GM12878 (cell line): ENCODE measurements at regions of chr13 and their contacts with region 1.

Region 1: DNA sequence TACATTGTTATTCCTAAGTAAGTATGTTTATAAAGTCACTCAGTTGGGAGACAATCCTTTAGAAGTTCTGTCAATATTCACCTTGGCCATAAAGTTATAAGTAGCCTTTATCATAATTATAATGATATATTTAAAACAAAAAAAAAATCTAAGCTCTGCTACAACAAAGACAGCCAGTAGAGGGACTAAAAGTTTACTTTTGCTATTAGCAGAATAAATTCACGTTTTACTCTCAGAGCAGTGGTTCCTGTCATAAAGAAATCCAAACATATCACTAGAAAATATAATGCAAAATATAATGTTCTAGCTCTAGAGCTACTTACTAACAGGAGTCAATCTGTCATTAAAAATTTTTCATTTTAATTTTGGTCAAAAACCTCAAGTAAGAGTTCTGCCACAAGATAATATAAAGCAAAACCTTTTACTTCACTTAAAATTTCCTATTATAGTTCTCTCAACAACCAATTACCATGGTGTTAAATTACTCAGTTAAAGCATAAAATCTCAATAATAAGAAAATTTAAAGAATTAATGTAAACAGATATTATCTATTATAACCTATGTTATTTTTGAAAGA is 17.7 kb downstream of the INTS6 start:
- DNase-seq: no peak
- ATAC-seq: peak; percentile 67
- H3K4me3 ChIP-seq: no peak overlapping the region
- H3K27ac ChIP-seq: no peak overlapping the region
- H3K4me1 ChIP-seq: no peaks in the 10 kb centered on the region
- H3K27me3 ChIP-seq: no peaks in the 10 kb centered on the region
- CTCF ChIP-seq: peak; percentile 39 to 61 (median 39); a peak in 4 of 6 replicates
- EP300 ChIP-seq: no peak
- POLR2A ChIP-seq: no peak
- RAD21 ChIP-seq: peak; percentile 78

Region 2: DNA sequence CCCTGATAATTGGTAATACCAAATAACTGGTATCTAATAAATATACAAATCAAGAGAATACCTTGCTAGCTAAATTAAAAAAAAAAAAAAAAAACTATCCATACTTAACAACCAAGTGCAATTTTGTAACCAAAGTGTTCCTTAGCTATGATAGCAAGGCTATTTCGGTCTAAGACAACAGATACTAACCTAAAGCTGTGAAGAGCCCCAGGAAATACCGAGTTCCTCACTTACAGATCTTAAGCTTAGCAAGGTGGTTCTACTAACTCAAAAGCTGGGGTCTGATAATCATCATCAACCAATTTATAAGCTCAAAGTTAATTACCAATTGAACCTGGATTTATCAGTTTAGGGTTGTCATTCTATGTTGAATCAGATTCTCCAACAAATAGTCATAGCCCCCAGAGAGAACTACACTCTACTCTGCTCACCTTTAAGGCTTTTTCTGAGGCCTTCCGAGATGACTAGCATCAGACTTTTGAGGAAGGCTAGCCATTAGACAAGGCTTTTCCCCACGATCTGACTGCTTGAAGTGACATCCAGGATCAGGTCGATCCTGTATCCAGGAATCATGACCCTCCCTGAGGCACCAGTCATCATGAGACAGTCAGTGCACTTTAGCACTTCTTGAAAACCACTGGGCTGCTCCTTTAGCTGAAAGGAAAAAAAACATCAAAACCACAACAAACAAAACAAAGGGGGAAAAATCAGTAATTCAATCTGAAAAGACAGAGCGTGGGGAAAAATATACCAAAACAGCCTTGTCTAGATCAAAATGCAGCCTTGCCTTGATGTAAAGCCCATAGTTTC is 14.2 kb before region 1 on chr13:
- CTCF ChIA-PET with region 1: interaction called, 11 read pairs
- POLR2A ChIA-PET with region 1: interaction called, 5 read pairs
- RAD21 ChIA-PET with region 1: interaction called, 6 read pairs
- SMC1A ChIA-PET with region 1: interaction called, 13 read pairs
- in situ Hi-C with region 1: no loop called
- intact Hi-C with region 1: no loop called
- DNase-seq: no peak
- ATAC-seq: 0 out of 3 replicates have a peak, but pooled peaks have one; percentile 6
- H3K4me3 ChIP-seq: no peak overlapping the region
- H3K27ac ChIP-seq: peak overlapping the region; percentile 66
- H3K4me1 ChIP-seq: peaks cover 52% of the 10 kb centered on the region
- H3K27me3 ChIP-seq: no peaks in the 10 kb centered on the region
- CTCF ChIP-seq: no peak
- EP300 ChIP-seq: no peak
- POLR2A ChIP-seq: no peak
- RAD21 ChIP-seq: no peak

Region 3: DNA sequence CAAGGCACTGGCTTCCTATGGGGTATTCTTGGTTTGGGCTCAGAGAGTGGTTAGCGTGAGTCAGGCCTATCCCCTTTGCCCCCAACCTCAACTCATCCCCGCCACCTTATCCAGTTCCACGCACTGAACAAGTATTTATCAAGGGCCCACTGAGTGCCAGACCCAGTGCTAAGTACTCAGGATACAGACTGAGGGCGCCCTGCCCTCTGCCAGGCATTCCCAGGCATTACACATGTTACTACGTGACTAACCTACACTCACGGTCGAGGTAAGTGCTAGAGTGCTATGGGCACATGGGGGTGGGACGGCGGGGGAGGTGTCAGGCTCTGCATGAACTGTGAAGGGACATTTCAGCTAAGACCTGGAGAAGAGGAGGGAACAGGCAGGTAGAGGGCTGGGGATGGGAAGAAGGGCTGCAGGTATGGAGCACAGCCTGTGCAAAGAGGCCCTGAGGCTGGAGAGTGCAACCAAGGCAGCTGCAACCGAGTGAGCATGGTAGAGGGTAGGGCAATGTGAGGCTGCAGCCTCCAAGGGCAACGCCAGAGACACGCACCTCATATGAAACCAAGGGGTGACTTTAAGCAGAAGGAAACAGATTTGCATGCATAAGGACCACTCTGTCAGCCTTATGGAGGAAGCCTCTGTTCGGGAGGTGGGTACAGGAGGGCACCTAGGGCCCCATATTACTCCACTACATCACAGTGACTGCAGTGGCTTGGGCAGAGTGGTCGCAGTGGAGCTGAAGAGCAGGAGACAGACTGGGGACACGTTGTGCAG is 346.3 kb after region 1 on chr13:
- CTCF ChIA-PET with region 1: interaction called, 11 read pairs
- POLR2A ChIA-PET with region 1: no interaction called
- RAD21 ChIA-PET with region 1: interaction called, 9 read pairs
- SMC1A ChIA-PET with region 1: interaction called, 6 read pairs
- in situ Hi-C with region 1: no loop called
- intact Hi-C with region 1: no loop called
- DNase-seq: no peak
- ATAC-seq: peak; percentile 86
- H3K4me3 ChIP-seq: no peak overlapping the region
- H3K27ac ChIP-seq: no peak overlapping the region
- H3K4me1 ChIP-seq: peaks cover 5% of the 10 kb centered on the region; the same call in 1 of the 2 replicates
- H3K27me3 ChIP-seq: no peaks in the 10 kb centered on the region
- CTCF ChIP-seq: peak; percentile 38 to 61 (median 57); a peak in 4 of 6 replicates
- EP300 ChIP-seq: no peak
- POLR2A ChIP-seq: no peak
- RAD21 ChIP-seq: peak; percentile 66

Region 4: DNA sequence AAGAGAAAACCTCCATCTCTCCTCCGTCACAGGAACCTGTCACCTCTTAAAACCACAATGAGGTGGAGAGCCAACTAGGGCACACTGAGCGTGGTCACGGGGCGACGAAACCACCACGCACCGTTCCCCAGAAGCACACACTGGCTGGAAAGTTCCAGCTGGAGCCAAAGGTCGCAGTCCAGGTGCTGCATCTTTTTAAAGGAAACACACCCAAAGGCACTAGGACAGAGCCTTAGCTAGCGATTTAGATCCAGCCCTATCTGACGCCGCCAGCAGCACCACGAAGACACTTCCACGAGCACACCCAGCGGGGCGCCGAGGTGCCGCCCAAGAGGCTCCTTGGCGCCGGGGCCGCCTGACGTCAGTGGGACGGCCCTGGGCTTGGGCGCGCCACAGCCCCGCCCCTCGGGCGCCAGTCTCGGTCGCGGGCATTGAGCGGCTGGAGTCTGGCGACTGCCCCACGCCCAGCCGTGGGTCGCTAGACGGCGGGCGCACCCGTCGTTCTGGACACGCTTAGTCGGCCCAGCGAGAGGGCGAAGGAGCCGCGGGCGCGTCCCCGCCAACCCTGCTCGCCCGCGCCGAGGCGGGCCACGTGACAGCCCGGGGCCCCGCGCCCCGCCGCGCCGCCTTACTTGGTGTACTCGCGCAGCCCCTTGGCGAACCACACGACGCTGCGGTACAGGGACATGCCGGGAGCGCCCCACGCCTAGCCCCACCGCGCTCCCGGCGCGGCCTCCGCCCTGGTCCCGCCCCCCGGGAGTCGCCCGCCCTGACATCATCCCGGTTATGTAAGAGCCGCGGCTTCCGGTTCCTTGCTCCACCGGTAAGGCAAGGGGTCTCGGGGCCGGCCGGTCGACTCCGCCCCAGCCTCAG is 368.6 kb after region 1 on chr13 and contains the start of gene DHRS12:
- CTCF ChIA-PET with region 1: interaction called, 100 read pairs
- POLR2A ChIA-PET with region 1: no interaction called
- RAD21 ChIA-PET with region 1: interaction called, 38 read pairs
- SMC1A ChIA-PET with region 1: interaction called, 39 read pairs
- in situ Hi-C with region 1: loop called (anchors 5 kb)
- intact Hi-C with region 1: no loop called
- DNase-seq: peak; percentile 58
- ATAC-seq: peak; percentile 86
- H3K4me3 ChIP-seq: peak within 1 kb of the TSS; percentile 82
- H3K27ac ChIP-seq: peak within 1 kb of the TSS; percentile 91
- H3K4me1 ChIP-seq: peaks cover 17% of the 10 kb centered on the region
- H3K27me3 ChIP-seq: no peaks in the 10 kb centered on the region
- CTCF ChIP-seq: no peak; a peak in 1 of 6 replicates
- EP300 ChIP-seq: peak in 1 of 2 experiments; percentile 30; a peak in 1 of 4 replicates
- POLR2A ChIP-seq: peak; percentile 95
- RAD21 ChIP-seq: 0 out of 2 replicates have a peak, but pooled peaks have one; percentile 14
- polyA plus RNA-seq, gene DHRS12: 2.9 to 4.0 TPM